ENCODE measurements at regions of chr20 and their contacts with region 1.

Region 1: GRCh38 chr20:25065625-25066338 is 7.8 kb upstream of the ACSS1 start:
- DNase-seq: peak; percentile 69
- H3K4me3 ChIP-seq: no peak overlapping the region
- H3K27ac ChIP-seq: no peak overlapping the region
- H3K4me1 ChIP-seq: no peaks in the 10 kb centered on the region
- H3K27me3 ChIP-seq: peaks cover 3% of the 10 kb centered on the region
- CTCF ChIP-seq: peak; percentile 65

Region 2: GRCh38 chr20:25407311-25408169 is 341.8 kb after region 1 on chr20 and contains the start of gene GINS1:
- intact Hi-C with region 1: loop called (anchors 10 kb)
- DNase-seq: peak; percentile 92
- H3K4me3 ChIP-seq: peak within 1 kb of the TSS; percentile 75
- H3K27ac ChIP-seq: no peak within 1 kb of the TSS
- H3K4me1 ChIP-seq: no peaks in the 10 kb centered on the region
- H3K27me3 ChIP-seq: no peaks in the 10 kb centered on the region
- CTCF ChIP-seq: no peak
- total RNA-seq, gene GINS1: 5.4 to 24.0 TPM

Measured in colonic mucosa (tissue), 4 donors.